Activated CD4-positive, alpha-beta T cell treated with anti-CD3 and anti-CD28 coated beads for 36 hours (primary cell): ENCODE measurements at regions of chr19 and their contacts with region 1.

Region 1: GRCh38 chr19:52095172-52096014 is at the start of gene ZNF841:
- DNase-seq: peak; percentile 96
- ATAC-seq: peak; percentile 98
- H3K4me3 Mint-ChIP-seq: peak within 1 kb of the TSS; percentile 94
- H3K27ac Mint-ChIP-seq: peak within 1 kb of the TSS; percentile 95
- H3K4me1 Mint-ChIP-seq: peaks cover 22% of the 10 kb centered on the region
- H3K27me3 Mint-ChIP-seq: no peaks in the 10 kb centered on the region
- total RNA-seq, gene ZNF841: 18.0 to 20.3 TPM

Region 2: DNA sequence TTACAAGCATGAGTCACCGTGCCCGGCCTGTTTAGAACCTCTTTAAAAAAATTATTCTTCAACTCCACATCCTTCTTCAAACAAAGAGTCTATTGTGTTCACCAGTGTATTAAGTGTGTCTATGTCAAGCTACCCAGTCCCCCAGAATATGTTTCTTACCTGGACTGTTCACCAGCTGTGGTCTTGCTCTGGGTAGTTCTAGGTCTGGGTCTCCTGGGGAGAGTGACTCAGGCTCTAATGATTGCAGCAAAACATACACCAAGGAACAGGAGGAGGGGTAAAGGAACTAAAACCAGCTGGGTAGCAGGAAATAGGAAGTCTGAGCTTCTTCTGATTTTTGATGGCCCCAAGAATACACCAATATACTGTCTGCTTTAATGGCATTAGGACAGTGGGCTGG is 343.7 kb before region 1 on chr19 and contains the start of gene FPR1:
- CTCF ChIA-PET with region 1: no interaction called
- POLR2A ChIA-PET with region 1: no interaction called
- intact Hi-C with region 1: no loop called
- DNase-seq: no peak
- ATAC-seq: no peak
- H3K4me3 Mint-ChIP-seq: no peak within 1 kb of the TSS
- H3K27ac Mint-ChIP-seq: no peak within 1 kb of the TSS
- H3K4me1 Mint-ChIP-seq: no peaks in the 10 kb centered on the region
- H3K27me3 Mint-ChIP-seq: peaks cover 5% of the 10 kb centered on the region
- total RNA-seq, gene FPR1: not detected

Region 3: DNA sequence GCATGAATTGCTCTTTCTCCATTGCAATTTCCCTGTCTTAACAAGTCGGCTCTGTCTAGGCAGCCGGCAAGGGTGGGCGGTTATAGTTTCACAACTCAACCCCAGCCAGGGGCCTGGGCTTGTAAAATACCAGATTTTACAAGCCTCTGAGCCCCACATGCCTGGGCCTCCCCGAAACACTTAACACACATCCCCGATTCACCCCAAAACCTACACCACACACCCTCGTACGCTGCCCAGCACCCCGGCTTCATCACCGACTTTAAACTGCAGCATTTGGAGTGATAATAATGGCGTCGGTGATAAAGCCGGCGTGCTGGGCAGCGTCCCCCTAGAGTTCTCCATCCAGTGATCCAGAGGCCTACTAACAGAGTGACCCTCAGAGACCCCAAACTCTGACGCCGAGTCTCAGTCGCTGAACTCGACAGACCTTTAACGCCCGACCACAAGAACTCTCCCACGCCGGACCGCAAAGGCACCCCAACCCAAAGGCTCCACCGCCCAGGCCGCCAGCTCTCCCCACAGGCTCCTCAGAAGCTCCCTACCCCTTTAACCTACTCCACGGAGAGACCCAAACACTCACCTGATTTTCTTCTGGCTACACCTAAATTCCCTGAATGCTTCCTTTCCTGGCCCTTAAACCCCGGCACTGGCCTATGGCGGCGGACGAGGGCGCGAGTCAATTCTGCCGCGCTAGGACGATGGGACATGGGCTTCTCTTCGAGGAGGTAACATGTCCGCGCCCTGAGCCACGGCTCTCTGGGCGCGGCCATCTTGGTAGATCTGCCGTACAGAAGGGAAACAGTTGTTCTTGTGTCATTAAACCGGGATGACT is 190.8 kb before region 1 on chr19 and contains the start of gene ZNF649:
- CTCF ChIA-PET with region 1: no interaction called
- POLR2A ChIA-PET with region 1: no interaction called
- intact Hi-C with region 1: loop called in 1 of 2 experiments (anchors 1 kb)
- DNase-seq: peak; percentile 89
- ATAC-seq: peak; percentile 92
- H3K4me3 Mint-ChIP-seq: peak within 1 kb of the TSS; percentile 91
- H3K27ac Mint-ChIP-seq: peak within 1 kb of the TSS; percentile 99
- H3K4me1 Mint-ChIP-seq: peaks cover 22% of the 10 kb centered on the region
- H3K27me3 Mint-ChIP-seq: peaks cover 18% of the 10 kb centered on the region
- total RNA-seq, gene ZNF649: 9.6 to 11.2 TPM

Region 4: GRCh38 chr19:52028027-52028779 is 67.2 kb before region 1 on chr19 and contains the start of gene ZNF614:
- CTCF ChIA-PET with region 1: interaction called, 3 read pairs
- POLR2A ChIA-PET with region 1: no interaction called
- intact Hi-C with region 1: loop called in 1 of 2 experiments (anchors 1 kb)
- DNase-seq: peak; percentile 93
- ATAC-seq: peak; percentile 94
- H3K4me3 Mint-ChIP-seq: peak within 1 kb of the TSS; percentile 81
- H3K27ac Mint-ChIP-seq: peak within 1 kb of the TSS; percentile 88
- H3K4me1 Mint-ChIP-seq: peaks cover 13% of the 10 kb centered on the region
- H3K27me3 Mint-ChIP-seq: no peaks in the 10 kb centered on the region
- total RNA-seq, gene ZNF614: 9.4 to 10.6 TPM

Region 5: GRCh38 chr19:52048555-52049501 is 46.6 kb before region 1 on chr19 and contains the start of gene ZNF432:
- CTCF ChIA-PET with region 1: no interaction called
- POLR2A ChIA-PET with region 1: no interaction called
- intact Hi-C with region 1: loop called in 1 of 2 experiments (anchors 1 kb)
- DNase-seq: peak; percentile 88
- ATAC-seq: peak; percentile 88
- H3K4me3 Mint-ChIP-seq: peak within 1 kb of the TSS; percentile 94
- H3K27ac Mint-ChIP-seq: peak within 1 kb of the TSS; percentile 100
- H3K4me1 Mint-ChIP-seq: peaks cover 16% of the 10 kb centered on the region
- H3K27me3 Mint-ChIP-seq: no peaks in the 10 kb centered on the region
- total RNA-seq, gene ZNF432: 11.5 to 12.8 TPM

Region 6: DNA sequence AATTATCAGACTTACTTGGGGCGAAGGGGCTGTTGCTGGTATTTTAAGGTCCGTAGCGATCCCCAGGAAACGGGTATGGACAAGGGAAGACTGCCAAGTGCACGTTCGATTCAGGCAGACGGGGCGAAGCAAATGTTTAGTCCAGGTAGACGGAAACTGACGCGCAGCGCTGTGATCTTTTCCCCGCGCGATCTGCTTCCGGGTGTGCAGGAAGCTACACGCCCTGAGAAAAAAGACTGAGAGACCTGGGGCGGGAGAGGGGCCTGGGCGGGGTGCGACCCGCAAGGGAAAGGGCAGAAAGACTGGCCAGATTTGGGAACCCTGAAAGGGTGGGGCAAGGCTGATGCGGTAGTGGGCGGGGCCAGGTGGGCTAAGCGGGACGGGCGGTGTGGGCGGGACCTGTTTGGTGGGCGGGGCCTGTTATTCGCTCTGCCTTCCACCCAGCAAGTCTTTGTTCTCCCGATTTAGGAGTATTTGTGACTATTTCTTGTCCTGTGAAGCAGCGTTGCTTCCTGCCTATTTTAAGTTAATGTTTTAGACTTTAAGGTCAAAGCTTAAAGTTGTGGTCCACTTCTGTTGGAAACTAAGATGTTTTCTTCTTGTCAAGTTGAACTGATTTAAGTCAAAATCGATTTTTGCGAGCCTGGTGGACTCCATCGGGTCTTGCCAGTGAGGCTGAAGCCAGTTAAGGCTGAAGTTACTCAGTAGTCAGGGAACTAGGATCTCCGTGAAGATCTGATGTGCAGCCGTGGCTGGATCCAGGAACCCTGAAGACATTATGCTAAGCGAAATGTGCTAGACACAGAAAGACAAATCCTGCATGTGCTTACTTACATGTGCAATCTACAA is 76.2 kb after region 1 on chr19 and contains the start of gene ZNF836:
- CTCF ChIA-PET with region 1: no interaction called
- POLR2A ChIA-PET with region 1: no interaction called
- intact Hi-C with region 1: loop called in 1 of 2 experiments (anchors 1 kb)
- DNase-seq: peak; percentile 96
- ATAC-seq: peak; percentile 96
- H3K4me3 Mint-ChIP-seq: peak within 1 kb of the TSS; percentile 87
- H3K27ac Mint-ChIP-seq: peak within 1 kb of the TSS; percentile 93
- H3K4me1 Mint-ChIP-seq: peaks cover 17% of the 10 kb centered on the region
- H3K27me3 Mint-ChIP-seq: no peaks in the 10 kb centered on the region
- total RNA-seq, gene ZNF836: 10.1 to 11.5 TPM

Region 7: GRCh38 chr19:52237771-52238400 is 142.5 kb after region 1 on chr19:
- CTCF ChIA-PET with region 1: no interaction called
- POLR2A ChIA-PET with region 1: no interaction called
- intact Hi-C with region 1: loop called in 1 of 2 experiments (anchors 2 kb)
- DNase-seq: peak; percentile 73
- ATAC-seq: peak; percentile 65
- H3K4me3 Mint-ChIP-seq: no peak overlapping the region
- H3K27ac Mint-ChIP-seq: no peak overlapping the region
- H3K4me1 Mint-ChIP-seq: no peaks in the 10 kb centered on the region
- H3K27me3 Mint-ChIP-seq: no peaks in the 10 kb centered on the region